HEK293 (cell line): ENCODE measurements at regions of chr1 and their contacts with region 1.

Region 1: GRCh38 chr1:25608488-25609178 is 8.0 kb upstream of the MAN1C1 start:
- H3K4me3 ChIP-seq: no peak overlapping the region
- H3K27ac ChIP-seq: no peak overlapping the region
- H3K4me1 ChIP-seq: no peaks in the 10 kb centered on the region
- CTCF ChIP-seq: peak; percentile 71

Region 2: DNA sequence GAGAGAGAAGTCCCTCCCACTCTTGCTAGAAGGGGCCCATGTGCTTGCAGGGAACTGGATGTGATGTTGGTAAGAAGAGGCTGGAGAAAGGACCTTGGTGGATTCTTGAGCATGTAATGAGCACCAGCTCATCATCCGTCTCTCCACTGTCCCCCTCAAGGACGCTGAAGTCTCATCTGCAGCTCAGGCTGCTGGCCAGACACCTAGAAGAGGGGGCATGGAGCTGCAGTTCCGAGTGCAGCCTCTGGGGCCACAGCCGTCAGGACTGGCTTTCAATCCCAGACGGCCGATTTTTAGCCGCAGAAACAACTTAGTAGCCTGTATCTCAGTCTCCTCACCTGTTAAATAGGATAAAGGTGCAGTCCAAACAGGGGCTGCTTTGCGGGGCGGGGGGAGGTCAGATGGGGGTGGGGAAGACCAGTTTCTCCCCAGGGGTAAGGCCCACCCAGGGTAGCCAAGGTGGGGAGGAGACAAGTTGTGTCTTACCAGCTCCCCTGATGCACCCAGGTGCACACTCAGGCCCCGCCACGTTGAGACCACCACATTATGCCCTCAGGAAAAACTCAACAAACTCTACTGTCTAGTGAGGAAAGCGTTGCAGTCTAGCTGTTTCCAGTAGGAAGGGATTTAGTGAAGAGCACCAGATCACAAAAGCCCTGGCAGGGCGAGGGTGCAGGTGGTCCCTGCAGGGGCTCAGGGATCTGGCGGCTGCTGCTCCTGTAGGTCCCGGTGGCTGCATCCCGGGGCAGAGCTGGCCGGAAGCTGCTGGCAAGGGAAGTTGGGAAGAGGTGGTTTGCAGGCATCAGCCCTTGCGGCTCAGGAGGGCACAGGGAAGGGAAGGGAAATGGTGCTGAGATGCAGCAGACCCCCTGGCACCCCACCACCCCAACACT is 35.7 kb before region 1 on chr1:
- CTCF ChIA-PET with region 1: interaction called, 10 read pairs
- POLR2A ChIA-PET with region 1: interaction called, 4 read pairs
- H3K4me3 ChIP-seq: no peak overlapping the region
- H3K27ac ChIP-seq: no peak overlapping the region
- H3K4me1 ChIP-seq: peaks cover 5% of the 10 kb centered on the region
- CTCF ChIP-seq: 0 out of 2 replicates have a peak, but pooled peaks have one; percentile 34

Region 3: DNA sequence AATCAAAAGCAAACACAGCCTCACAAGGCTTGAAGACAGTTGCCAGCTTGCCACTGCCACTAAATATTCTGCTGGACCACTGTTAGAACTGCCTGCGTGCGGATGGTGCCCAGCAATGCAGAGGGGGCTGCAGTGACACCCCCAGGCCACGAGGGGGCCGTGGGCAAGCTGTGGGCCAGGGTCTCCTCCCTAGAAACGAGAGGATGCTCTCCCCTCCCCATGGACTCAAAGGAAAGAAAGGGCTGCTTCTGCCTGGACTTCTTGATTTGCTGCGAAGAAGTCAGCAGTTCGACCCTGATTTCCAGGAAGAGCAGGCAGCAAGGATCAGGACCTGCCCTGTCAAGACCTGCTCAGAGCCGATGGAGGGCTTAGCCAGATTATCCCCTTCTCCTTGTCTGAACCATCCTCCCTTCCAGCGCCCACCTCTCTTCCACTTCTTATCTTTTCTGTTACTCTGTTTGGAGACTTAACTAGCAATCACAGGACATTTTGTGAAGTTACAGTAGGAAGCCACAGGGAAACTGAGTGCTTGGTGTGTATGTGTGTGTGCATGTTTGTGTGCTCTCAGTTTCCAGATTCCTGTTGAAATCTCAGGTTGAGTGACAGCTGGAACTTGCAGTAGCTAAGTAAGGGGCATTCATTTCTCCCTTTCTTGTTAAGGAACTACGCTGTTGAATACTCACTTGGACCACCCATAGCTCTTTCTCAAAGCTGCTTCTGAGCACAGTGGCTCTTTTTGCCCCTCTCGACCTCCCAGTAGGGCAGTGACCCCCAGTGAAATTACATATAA is 10.7 kb after region 1 on chr1:
- CTCF ChIA-PET with region 1: interaction called, 11 read pairs
- POLR2A ChIA-PET with region 1: no interaction called
- H3K4me3 ChIP-seq: no peak overlapping the region
- H3K27ac ChIP-seq: no peak overlapping the region
- H3K4me1 ChIP-seq: no peaks in the 10 kb centered on the region; the same call in 1 of the 2 replicates
- CTCF ChIP-seq: peak; percentile 81

Region 4: GRCh38 chr1:25796811-25797458 is 188.3 kb after region 1 on chr1:
- CTCF ChIA-PET with region 1: interaction called, 32 read pairs
- POLR2A ChIA-PET with region 1: no interaction called
- H3K4me3 ChIP-seq: no peak overlapping the region
- H3K27ac ChIP-seq: no peak overlapping the region
- H3K4me1 ChIP-seq: 0 out of 2 replicates have a peak, but pooled peaks cover 2% of the 10 kb centered on the region
- CTCF ChIP-seq: peak; percentile 82

Region 5: GRCh38 chr1:25810341-25811299 is 202.0 kb after region 1 on chr1:
- CTCF ChIA-PET with region 1: interaction called, 17 read pairs
- POLR2A ChIA-PET with region 1: interaction called, 3 read pairs
- H3K4me3 ChIP-seq: no peak overlapping the region
- H3K27ac ChIP-seq: no peak overlapping the region
- H3K4me1 ChIP-seq: no peaks in the 10 kb centered on the region
- CTCF ChIP-seq: peak; percentile 95